Natural killer cell (primary cell): ENCODE measurements at regions of chr22 and their contacts with region 1.

Region 1: GRCh38 chr22:50507991-50508884 is at the start of gene NCAPH2:
- DNase-seq: peak; percentile 97 to 99
- ATAC-seq: peak; percentile 79 to 90 (median 80)
- H3K4me3 ChIP-seq: peak within 1 kb of the TSS; percentile 85
- H3K4me3 Mint-ChIP-seq: peak within 1 kb of the TSS; percentile 88
- H3K27ac ChIP-seq: peak within 1 kb of the TSS; percentile 94
- H3K27ac Mint-ChIP-seq: peak within 1 kb of the TSS; percentile 90 to 96
- H3K4me1 ChIP-seq: peaks cover 26% of the 10 kb centered on the region
- H3K4me1 Mint-ChIP-seq: peaks cover 17 to 31% of the 10 kb centered on the region in 2 donors
- H3K27me3 ChIP-seq: no peaks in the 10 kb centered on the region
- H3K27me3 Mint-ChIP-seq: no peaks in the 10 kb centered on the region
- CTCF ChIP-seq: no peak
- total RNA-seq, gene NCAPH2: 94.5 to 106 (median 104) TPM

Region 2: DNA sequence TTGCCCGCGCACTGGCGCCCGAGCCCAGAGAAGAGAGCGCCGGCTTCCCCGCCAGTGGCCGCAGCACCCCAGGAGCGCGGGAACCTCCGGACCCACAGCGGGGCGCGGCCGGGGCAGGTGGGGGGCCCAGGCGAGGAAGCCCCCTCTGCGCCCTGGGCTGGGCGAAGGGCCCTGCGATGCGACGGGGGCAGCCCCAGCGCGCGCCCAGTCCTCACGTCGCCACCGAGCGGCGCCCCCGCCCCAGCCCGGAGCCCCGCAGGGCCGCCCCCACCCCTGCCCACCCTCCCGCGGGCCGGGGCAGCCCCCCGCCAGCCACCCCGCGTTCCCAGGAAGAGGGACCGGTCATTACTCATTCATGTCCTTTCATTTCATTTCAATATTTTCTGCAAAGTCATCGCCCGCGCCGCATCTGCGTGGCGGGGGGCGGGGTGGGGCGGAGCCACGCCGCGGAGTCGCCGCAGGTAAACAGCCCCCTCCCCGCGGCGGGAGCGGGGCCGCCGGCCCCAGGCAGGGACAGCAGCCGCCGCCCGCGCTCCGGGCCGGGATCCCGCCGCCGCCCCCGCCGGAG is 338.4 kb before region 1 on chr22:
- intact Hi-C with region 1: no loop called
- DNase-seq: peak in 1 of 2 donors; percentile 40
- ATAC-seq: peak; percentile 66 to 79 (median 76)
- H3K4me3 ChIP-seq: no peak overlapping the region
- H3K4me3 Mint-ChIP-seq: peak overlapping the region; percentile 49
- H3K27ac ChIP-seq: no peak overlapping the region
- H3K27ac Mint-ChIP-seq: no peak overlapping the region
- H3K4me1 ChIP-seq: peaks cover 5% of the 10 kb centered on the region
- H3K4me1 Mint-ChIP-seq: peaks cover 0 to 14% of the 10 kb centered on the region in 2 donors
- H3K27me3 ChIP-seq: peaks cover 19% of the 10 kb centered on the region
- H3K27me3 Mint-ChIP-seq: peaks cover 25 to 33% of the 10 kb centered on the region in 2 donors
- CTCF ChIP-seq: no peak

Region 3: DNA sequence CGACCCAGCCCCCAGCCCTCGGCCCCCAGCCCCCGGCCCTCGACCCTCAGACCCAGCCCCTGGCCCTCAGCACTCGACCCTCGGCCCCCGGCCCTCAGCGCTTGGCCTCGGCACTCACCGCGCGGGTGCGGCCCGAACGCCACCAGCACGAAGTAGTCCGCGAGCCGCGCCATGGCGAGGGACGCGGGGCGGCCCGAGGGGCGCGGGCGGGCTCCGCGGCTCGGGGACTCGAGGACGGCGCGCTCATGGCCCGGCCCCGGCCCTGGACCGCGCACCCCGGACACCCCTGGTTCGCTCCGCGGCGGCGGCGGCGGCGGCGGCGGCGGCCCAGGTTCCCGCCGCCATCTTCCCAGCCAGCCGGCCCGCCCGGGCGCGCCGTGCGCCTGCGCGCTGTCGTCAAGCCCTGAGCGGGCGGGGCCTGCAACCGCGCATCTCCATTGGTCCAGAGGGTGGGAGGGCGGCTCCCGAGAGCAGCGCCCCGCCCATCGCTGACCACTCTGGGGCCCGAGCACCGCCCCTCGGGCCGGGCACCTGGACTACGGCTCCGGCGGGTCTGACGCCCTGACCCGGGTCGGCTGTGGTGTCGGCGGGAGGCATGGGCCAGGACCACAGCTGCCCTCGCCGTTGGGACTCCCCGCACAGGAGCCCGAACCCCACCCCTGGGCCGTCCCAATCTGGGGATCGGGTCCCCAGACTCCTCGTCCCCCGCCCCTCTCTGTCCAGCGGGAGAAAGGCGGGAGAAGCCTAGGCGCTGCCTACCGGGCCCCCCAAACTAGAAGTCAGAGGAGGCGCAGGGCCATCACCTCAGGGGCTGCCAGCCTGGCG is 33.4 kb before region 1 on chr22 and contains the start of gene SBF1:
- intact Hi-C with region 1: loop called (anchors 5 kb)
- DNase-seq: peak; percentile 90 to 95
- ATAC-seq: peak; percentile 84 to 92 (median 84)
- H3K4me3 ChIP-seq: peak within 1 kb of the TSS; percentile 68
- H3K4me3 Mint-ChIP-seq: peak within 1 kb of the TSS; percentile 97
- H3K27ac ChIP-seq: peak within 1 kb of the TSS; percentile 68
- H3K27ac Mint-ChIP-seq: peak within 1 kb of the TSS; percentile 79 to 84
- H3K4me1 ChIP-seq: peaks cover 50% of the 10 kb centered on the region
- H3K4me1 Mint-ChIP-seq: peaks cover 28 to 49% of the 10 kb centered on the region in 2 donors
- H3K27me3 ChIP-seq: no peaks in the 10 kb centered on the region
- H3K27me3 Mint-ChIP-seq: peaks cover 3% of the 10 kb centered on the region in 2 donors
- CTCF ChIP-seq: no peak
- total RNA-seq, gene SBF1: 235 to 284 (median 242) TPM

Region 4: DNA sequence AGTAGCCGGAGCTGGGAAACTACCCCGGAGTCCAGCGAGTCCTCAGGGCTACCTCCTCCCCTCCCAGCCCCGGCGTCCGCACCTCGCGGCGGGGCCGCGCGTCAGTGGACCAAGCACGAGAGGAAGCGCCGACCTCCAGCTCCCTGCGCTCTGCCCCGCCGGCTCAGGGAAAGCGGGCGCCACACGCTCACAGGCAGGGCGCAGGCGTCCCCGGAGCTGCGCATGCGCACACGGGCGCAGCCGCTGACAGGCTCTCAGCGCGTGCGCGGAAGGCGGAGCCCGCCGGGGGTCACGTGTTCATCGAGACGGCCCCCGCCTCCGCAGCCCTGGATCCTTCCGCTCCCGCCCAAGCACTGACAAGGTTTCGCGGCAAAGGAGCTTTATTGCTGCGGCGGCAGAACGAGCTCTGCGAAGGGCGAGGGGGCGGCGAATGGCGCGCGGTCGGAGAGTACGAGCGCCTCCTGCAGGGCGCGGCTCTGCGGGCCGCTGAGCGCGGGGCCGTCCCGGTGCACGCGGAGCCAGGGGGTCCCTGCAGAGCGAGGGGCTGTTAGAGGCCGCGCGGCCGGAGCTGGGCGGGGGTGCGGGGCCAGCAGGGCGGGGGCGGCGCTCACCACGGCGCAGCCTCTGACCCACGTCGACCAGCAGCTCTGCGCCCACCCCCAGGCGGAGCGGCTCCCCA is 17.3 kb after region 1 on chr22 and contains the start of gene SCO2:
- intact Hi-C with region 1: loop called (anchors 1 kb)
- DNase-seq: peak; percentile 95 to 100
- ATAC-seq: peak; percentile 60 to 78 (median 69)
- H3K4me3 ChIP-seq: peak within 1 kb of the TSS; percentile 76
- H3K4me3 Mint-ChIP-seq: peak within 1 kb of the TSS; percentile 90
- H3K27ac ChIP-seq: peak within 1 kb of the TSS; percentile 93
- H3K27ac Mint-ChIP-seq: peak within 1 kb of the TSS; percentile 84 to 91
- H3K4me1 ChIP-seq: peaks cover 50% of the 10 kb centered on the region
- H3K4me1 Mint-ChIP-seq: peaks cover 26 to 31% of the 10 kb centered on the region in 2 donors
- H3K27me3 ChIP-seq: no peaks in the 10 kb centered on the region
- H3K27me3 Mint-ChIP-seq: no peaks in the 10 kb centered on the region
- CTCF ChIP-seq: no peak
- total RNA-seq, gene SCO2: 2.8 to 13.5 (median 8.4) TPM

Region 5: GRCh38 chr22:50562523-50563412 is 54.5 kb after region 1 on chr22 and contains the start of gene SYCE3:
- intact Hi-C with region 1: loop called (anchors 5 kb)
- DNase-seq: peak; percentile 98
- ATAC-seq: peak; percentile 93 to 98 (median 93)
- H3K4me3 ChIP-seq: peak within 1 kb of the TSS; percentile 49
- H3K4me3 Mint-ChIP-seq: peak within 1 kb of the TSS; percentile 97
- H3K27ac ChIP-seq: peak within 1 kb of the TSS; percentile 74
- H3K27ac Mint-ChIP-seq: peak within 1 kb of the TSS; percentile 87 to 95
- H3K4me1 ChIP-seq: peaks cover 15% of the 10 kb centered on the region
- H3K4me1 Mint-ChIP-seq: peaks cover 23 to 28% of the 10 kb centered on the region in 2 donors
- H3K27me3 ChIP-seq: no peaks in the 10 kb centered on the region
- H3K27me3 Mint-ChIP-seq: peaks cover 0 to 6% of the 10 kb centered on the region in 2 donors
- CTCF ChIP-seq: peak; percentile 82
- total RNA-seq, gene SYCE3: not detected

Region 6: DNA sequence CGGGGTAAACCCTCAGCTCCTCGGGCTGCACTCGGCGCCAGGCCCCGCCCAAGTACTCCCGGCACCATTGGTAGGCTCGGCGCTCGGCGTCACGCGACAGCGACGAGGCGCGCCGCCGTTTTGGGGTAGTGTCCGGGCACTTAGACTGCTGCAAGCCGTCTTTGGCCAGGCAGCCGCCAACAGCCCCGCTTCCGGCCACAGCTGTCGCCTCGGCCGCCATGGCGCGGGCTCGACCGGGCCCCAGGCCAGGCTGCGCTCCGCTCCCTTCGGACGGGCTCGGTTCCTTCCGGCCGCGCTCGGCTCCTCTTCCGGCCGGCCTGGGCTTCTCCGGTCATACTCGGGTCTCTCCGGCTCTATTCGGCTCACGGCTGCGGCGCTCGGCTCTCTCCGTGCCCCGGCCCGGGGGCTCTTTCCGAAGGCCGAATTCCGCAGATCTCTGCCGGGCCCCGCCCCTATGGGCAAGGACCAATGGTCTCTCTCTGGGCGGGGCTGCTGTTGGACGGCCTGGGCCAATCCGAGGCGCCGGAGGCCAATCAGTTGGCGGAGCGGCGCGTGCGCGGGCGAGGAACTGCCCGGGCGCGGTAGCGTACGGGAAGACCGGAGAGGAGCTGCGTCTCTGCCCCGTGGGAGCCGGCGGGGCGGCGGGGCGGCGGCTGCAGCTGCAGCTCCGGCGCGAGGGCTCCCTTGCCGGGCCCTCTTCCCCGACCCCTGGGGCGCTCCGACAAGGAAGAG is 74.5 kb after region 1 on chr22 and contains the start of gene CHKB:
- intact Hi-C with region 1: loop called (anchors 5 kb)
- DNase-seq: peak; percentile 98
- ATAC-seq: peak; percentile 93 to 99 (median 93)
- H3K4me3 ChIP-seq: peak within 1 kb of the TSS; percentile 82
- H3K4me3 Mint-ChIP-seq: peak within 1 kb of the TSS; percentile 91
- H3K27ac ChIP-seq: peak within 1 kb of the TSS; percentile 92
- H3K27ac Mint-ChIP-seq: peak within 1 kb of the TSS; percentile 88 to 94
- H3K4me1 ChIP-seq: peaks cover 33% of the 10 kb centered on the region
- H3K4me1 Mint-ChIP-seq: peaks cover 0 to 24% of the 10 kb centered on the region in 2 donors
- H3K27me3 ChIP-seq: no peaks in the 10 kb centered on the region
- H3K27me3 Mint-ChIP-seq: no peaks in the 10 kb centered on the region
- CTCF ChIP-seq: no peak
- total RNA-seq, gene CHKB: 166 to 204 (median 180) TPM

Region 7: GRCh38 chr22:50620593-50621355 is 112.5 kb after region 1 on chr22:
- intact Hi-C with region 1: loop called (anchors 2 kb)
- DNase-seq: peak; percentile 43 to 97
- ATAC-seq: peak; percentile 81 to 91 (median 84)
- H3K4me3 ChIP-seq: peak overlapping the region; percentile 42
- H3K4me3 Mint-ChIP-seq: peak overlapping the region; percentile 92
- H3K27ac ChIP-seq: peak overlapping the region; percentile 84
- H3K27ac Mint-ChIP-seq: peak overlapping the region; percentile 83 to 90
- H3K4me1 ChIP-seq: peaks cover 36% of the 10 kb centered on the region
- H3K4me1 Mint-ChIP-seq: peaks cover 27 to 35% of the 10 kb centered on the region in 2 donors
- H3K27me3 ChIP-seq: no peaks in the 10 kb centered on the region
- H3K27me3 Mint-ChIP-seq: peaks cover 0 to 3% of the 10 kb centered on the region in 2 donors
- CTCF ChIP-seq: peak; percentile 79